ENCODE measurements at regions of chr16 and their contacts with region 1.

Region 1: DNA sequence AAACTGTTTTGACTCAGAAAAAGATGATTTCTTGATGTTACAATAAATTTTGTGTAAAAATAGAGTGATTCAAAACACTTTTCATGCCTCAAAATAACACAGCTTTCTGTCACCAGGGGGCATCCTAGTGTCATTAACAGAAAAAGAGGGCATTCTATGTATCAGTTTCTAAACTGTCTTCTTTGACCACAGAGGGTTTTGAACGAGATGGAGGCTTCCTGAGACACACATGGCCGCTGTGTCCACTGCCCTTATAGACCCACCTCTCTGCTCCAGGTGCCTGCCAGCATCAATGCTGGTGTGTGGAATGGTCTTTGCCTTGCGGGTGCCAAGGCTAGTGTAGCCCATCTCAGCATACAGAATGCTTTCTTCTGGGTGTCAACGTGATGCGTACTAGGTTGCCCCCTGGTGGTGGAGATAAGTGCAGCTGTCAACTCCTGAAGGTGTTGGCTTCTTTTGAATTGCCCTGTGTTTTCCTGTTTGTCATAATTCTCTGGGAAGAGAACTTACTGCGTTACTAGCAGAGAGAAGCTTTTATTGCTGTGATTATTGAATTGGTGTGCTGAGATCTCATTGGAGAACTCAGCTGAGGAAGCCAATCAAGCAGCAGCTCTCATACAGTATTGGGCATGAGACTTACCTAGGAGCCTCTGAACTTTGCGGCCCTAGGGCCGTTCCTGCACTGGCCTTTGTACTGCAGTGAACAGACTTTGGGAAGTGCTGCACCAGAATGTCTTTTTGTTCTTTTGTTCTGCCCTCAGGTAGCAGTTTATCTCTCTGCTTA is 38.6 kb downstream of the USP10 start:
- DNase-seq: peak; percentile 49 to 77 (median 72)
- ATAC-seq: peak; percentile 85
- H3K4me3 ChIP-seq: no peak overlapping the region
- H3K4me3 Mint-ChIP-seq: peak overlapping the region in 6 of 10 donors; percentile 6 to 76 (median 38)
- H3K27ac ChIP-seq: no peak overlapping the region
- H3K27ac Mint-ChIP-seq: peak overlapping the region in 8 of 9 donors; percentile 21 to 81 (median 64)
- H3K4me1 ChIP-seq: peaks cover 0 to 23% of the 10 kb centered on the region in 2 donors
- H3K4me1 Mint-ChIP-seq: peaks cover 38 to 61% (median 55%) of the 10 kb centered on the region in 7 donors
- H3K27me3 ChIP-seq: no peaks in the 10 kb centered on the region
- H3K27me3 Mint-ChIP-seq: no peaks in the 10 kb centered on the region

Region 2: GRCh38 chr16:84277237-84277823 is 461.1 kb before region 1 on chr16:
- CTCF ChIA-PET with region 1: interaction called, 7 read pairs
- POLR2A ChIA-PET with region 1: no interaction called
- intact Hi-C with region 1: loop called (anchors 1 kb)
- DNase-seq: peak; percentile 27 to 73 (median 58)
- ATAC-seq: peak; percentile 78
- H3K4me3 ChIP-seq: no peak overlapping the region
- H3K4me3 Mint-ChIP-seq: no peak overlapping the region
- H3K27ac ChIP-seq: no peak overlapping the region
- H3K27ac Mint-ChIP-seq: no peak overlapping the region
- H3K4me1 ChIP-seq: no peaks in the 10 kb centered on the region
- H3K4me1 Mint-ChIP-seq: no peaks in the 10 kb centered on the region
- H3K27me3 ChIP-seq: no peaks in the 10 kb centered on the region
- H3K27me3 Mint-ChIP-seq: peaks cover 0 to 10% (median 0%) of the 10 kb centered on the region in 5 donors

Region 3: GRCh38 chr16:84625556-84625955 is 112.9 kb before region 1 on chr16:
- CTCF ChIA-PET with region 1: interaction called, 56 read pairs
- POLR2A ChIA-PET with region 1: interaction called, 3 read pairs
- intact Hi-C with region 1: loop called (anchors 1 kb)
- DNase-seq: no peak
- ATAC-seq: no peak
- H3K4me3 ChIP-seq: no peak overlapping the region
- H3K4me3 Mint-ChIP-seq: no peak overlapping the region
- H3K27ac ChIP-seq: no peak overlapping the region
- H3K27ac Mint-ChIP-seq: no peak overlapping the region
- H3K4me1 ChIP-seq: peaks cover 0 to 8% of the 10 kb centered on the region in 2 donors
- H3K4me1 Mint-ChIP-seq: peaks cover 6 to 33% (median 23%) of the 10 kb centered on the region in 7 donors
- H3K27me3 ChIP-seq: no peaks in the 10 kb centered on the region
- H3K27me3 Mint-ChIP-seq: peaks cover 0 to 44% (median 0%) of the 10 kb centered on the region in 5 donors

Region 4: DNA sequence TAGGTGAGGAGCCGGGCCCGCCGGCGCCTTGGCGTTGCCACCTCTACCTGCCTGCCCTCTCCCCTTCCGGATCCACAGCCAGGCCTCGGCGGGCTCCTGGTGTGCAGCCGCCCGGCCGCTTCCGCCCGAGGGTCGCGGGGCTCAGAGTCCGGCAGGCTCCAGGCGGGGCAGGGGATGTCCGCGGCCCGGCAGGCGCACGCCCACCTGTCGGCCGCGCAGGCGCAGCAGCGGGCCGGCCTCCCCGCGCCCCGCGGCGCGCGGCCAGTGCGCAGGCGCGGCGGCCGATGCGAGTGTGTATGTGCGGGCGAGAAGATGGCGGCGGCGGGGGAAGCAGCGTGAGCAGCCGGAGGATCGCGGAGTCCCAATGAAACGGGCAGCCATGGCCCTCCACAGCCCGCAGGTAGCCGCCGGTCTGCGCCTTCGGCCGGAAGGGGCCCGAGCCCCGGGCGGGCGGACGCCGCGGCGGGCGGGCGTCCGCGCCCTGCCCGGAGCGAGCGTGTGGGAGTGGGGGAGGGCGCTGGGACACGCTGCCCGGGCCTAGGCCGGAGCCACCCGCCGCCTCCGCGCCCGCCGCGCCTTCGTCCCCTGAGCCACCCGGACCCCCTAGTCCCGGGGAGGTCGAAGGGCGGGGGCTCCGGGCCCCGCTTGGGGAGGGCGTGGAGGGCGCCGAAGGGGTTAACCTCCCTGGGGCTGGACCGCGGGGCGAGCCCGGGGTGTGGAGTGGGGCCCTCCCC is 38.6 kb before region 1 on chr16 and contains the start of gene USP10:
- CTCF ChIA-PET with region 1: interaction called, 5 read pairs
- POLR2A ChIA-PET with region 1: no interaction called
- intact Hi-C with region 1: loop called in 1 of 2 experiments (anchors 1 kb)
- DNase-seq: peak; percentile 75 to 93 (median 88)
- ATAC-seq: peak; percentile 91
- H3K4me3 ChIP-seq: peak within 1 kb of the TSS; percentile 61
- H3K4me3 Mint-ChIP-seq: peak within 1 kb of the TSS; percentile 92 to 99 (median 98)
- H3K27ac ChIP-seq: peak within 1 kb of the TSS; percentile 87
- H3K27ac Mint-ChIP-seq: peak within 1 kb of the TSS; percentile 92 to 99 (median 96)
- H3K4me1 ChIP-seq: peaks cover 11 to 22% of the 10 kb centered on the region in 2 donors
- H3K4me1 Mint-ChIP-seq: peaks cover 19 to 46% (median 42%) of the 10 kb centered on the region in 7 donors
- H3K27me3 ChIP-seq: no peaks in the 10 kb centered on the region
- H3K27me3 Mint-ChIP-seq: peaks cover 0 to 4% (median 0%) of the 10 kb centered on the region in 5 donors
- total RNA-seq, gene USP10: 88.4 to 113 (median 112) TPM

Region 5: GRCh38 chr16:84754353-84754856 is 16.0 kb after region 1 on chr16:
- CTCF ChIA-PET with region 1: interaction called, 18 read pairs
- POLR2A ChIA-PET with region 1: no interaction called
- intact Hi-C with region 1: no loop called
- DNase-seq: peak in 8 of 9 donors; percentile 50 to 87 (median 83)
- ATAC-seq: peak; percentile 78
- H3K4me3 ChIP-seq: peak overlapping the region; percentile 4
- H3K4me3 Mint-ChIP-seq: peak overlapping the region; percentile 49 to 79 (median 69)
- H3K27ac ChIP-seq: peak overlapping the region; percentile 44
- H3K27ac Mint-ChIP-seq: peak overlapping the region; percentile 69 to 92 (median 84)
- H3K4me1 ChIP-seq: peaks cover 19 to 38% of the 10 kb centered on the region in 2 donors
- H3K4me1 Mint-ChIP-seq: peaks cover 46 to 83% (median 79%) of the 10 kb centered on the region in 7 donors
- H3K27me3 ChIP-seq: no peaks in the 10 kb centered on the region
- H3K27me3 Mint-ChIP-seq: no peaks in the 10 kb centered on the region

Region 6: GRCh38 chr16:84970447-84971127 is 232.1 kb after region 1 on chr16:
- CTCF ChIA-PET with region 1: interaction called, 11 read pairs
- POLR2A ChIA-PET with region 1: no interaction called
- intact Hi-C with region 1: loop called (anchors 1 kb)
- DNase-seq: peak; percentile 60 to 79 (median 74)
- ATAC-seq: peak; percentile 92
- H3K4me3 ChIP-seq: no peak overlapping the region
- H3K4me3 Mint-ChIP-seq: no peak overlapping the region
- H3K27ac ChIP-seq: no peak overlapping the region
- H3K27ac Mint-ChIP-seq: peak overlapping the region in 3 of 9 donors; percentile 9 to 78 (median 46)
- H3K4me1 ChIP-seq: peaks cover 0 to 6% of the 10 kb centered on the region in 2 donors
- H3K4me1 Mint-ChIP-seq: peaks cover 0 to 8% (median 4%) of the 10 kb centered on the region in 7 donors
- H3K27me3 ChIP-seq: no peaks in the 10 kb centered on the region
- H3K27me3 Mint-ChIP-seq: no peaks in the 10 kb centered on the region

Measured in naive thymus-derived CD4-positive, alpha-beta T cell (primary cell).